ENCODE measurements at regions of chr5 and their contacts with region 1.

Region 1: GRCh38 chr5:43484106-43484849 is 613 bp upstream of the TMEM267 start:
- DNase-seq: peak; percentile 90
- H3K4me3 Mint-ChIP-seq: peak overlapping the region; percentile 99
- H3K27ac Mint-ChIP-seq: peak overlapping the region; percentile 100
- H3K4me1 Mint-ChIP-seq: peaks cover 46% of the 10 kb centered on the region
- H3K27me3 Mint-ChIP-seq: no peaks in the 10 kb centered on the region

Region 2: GRCh38 chr5:43008369-43009153 is 475.7 kb before region 1 on chr5:
- CTCF ChIA-PET with region 1: interaction called, 4 read pairs
- POLR2A ChIA-PET with region 1: interaction called, 21 read pairs
- DNase-seq: peak; percentile 93
- H3K4me3 Mint-ChIP-seq: peak overlapping the region; percentile 89
- H3K27ac Mint-ChIP-seq: peak overlapping the region; percentile 97
- H3K4me1 Mint-ChIP-seq: peaks cover 39% of the 10 kb centered on the region
- H3K27me3 Mint-ChIP-seq: peaks cover 5% of the 10 kb centered on the region

Region 3: DNA sequence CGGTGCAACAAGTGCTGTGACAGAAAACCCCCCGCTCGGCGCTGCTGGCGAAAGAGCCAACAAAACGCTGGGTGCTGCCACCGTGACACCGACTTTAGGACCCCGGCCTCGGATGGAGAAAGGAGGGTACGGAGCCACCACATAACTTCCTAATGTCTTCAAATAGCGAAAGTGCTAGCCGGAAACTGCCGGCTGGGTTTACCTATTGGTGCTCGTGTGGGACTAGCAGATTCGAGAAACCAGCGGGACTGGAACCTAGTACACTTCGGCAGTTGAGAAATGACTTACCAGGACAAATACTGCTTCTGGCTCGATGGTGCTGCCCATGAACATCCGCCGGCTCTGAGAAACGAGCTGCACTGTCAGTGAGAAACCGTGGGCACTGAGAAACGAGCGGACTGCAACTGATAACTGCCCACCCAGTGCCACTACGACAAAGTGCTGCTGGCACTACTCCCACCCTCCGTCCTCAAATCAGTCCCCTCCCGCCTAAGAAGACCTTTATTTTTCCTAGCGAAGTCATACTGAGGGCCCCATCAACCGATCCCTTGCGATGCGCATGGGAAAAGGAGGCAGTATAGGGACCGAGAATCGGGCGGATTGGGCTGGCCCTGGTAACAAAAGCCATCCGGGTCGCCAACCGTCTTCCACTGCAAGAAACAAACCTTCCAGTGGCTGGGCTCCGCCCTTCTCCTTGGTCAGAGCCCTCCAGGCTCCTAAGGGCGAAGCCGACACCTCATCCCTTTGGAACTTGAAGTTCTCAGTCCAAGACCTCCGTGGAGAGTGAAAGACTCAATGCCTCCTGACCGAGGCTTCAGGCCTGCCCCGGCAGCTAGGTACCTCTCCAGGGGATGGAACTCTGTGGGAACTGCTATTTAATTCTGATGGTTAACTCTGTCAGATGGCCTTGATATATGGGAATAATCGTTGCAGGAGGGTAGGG is 417.2 kb before region 1 on chr5:
- CTCF ChIA-PET with region 1: interaction called, 9 read pairs
- POLR2A ChIA-PET with region 1: interaction called, 22 read pairs
- DNase-seq: peak; percentile 90
- H3K4me3 Mint-ChIP-seq: peak overlapping the region; percentile 97
- H3K27ac Mint-ChIP-seq: peak overlapping the region; percentile 100
- H3K4me1 Mint-ChIP-seq: peaks cover 47% of the 10 kb centered on the region
- H3K27me3 Mint-ChIP-seq: no peaks in the 10 kb centered on the region

Region 4: GRCh38 chr5:43305948-43306565 is 178.2 kb before region 1 on chr5:
- CTCF ChIA-PET with region 1: interaction called, 22 read pairs
- POLR2A ChIA-PET with region 1: interaction called, 80 read pairs
- DNase-seq: no peak
- H3K4me3 Mint-ChIP-seq: no peak overlapping the region
- H3K27ac Mint-ChIP-seq: peak overlapping the region; percentile 53
- H3K4me1 Mint-ChIP-seq: peaks cover 80% of the 10 kb centered on the region
- H3K27me3 Mint-ChIP-seq: no peaks in the 10 kb centered on the region

Region 5: GRCh38 chr5:43396762-43397304 is 87.4 kb before region 1 on chr5:
- CTCF ChIA-PET with region 1: interaction called, 18 read pairs
- POLR2A ChIA-PET with region 1: interaction called, 58 read pairs
- DNase-seq: peak; percentile 74
- H3K4me3 Mint-ChIP-seq: peak overlapping the region; percentile 99
- H3K27ac Mint-ChIP-seq: peak overlapping the region; percentile 94
- H3K4me1 Mint-ChIP-seq: peaks cover 33% of the 10 kb centered on the region
- H3K27me3 Mint-ChIP-seq: no peaks in the 10 kb centered on the region

Region 6: GRCh38 chr5:43556857-43557542 is 72.7 kb after region 1 on chr5 and contains the start of gene PAIP1:
- CTCF ChIA-PET with region 1: interaction called, 14 read pairs
- POLR2A ChIA-PET with region 1: interaction called, 60 read pairs
- DNase-seq: peak; percentile 87
- H3K4me3 Mint-ChIP-seq: peak within 1 kb of the TSS; percentile 86
- H3K27ac Mint-ChIP-seq: peak within 1 kb of the TSS; percentile 87
- H3K4me1 Mint-ChIP-seq: peaks cover 14% of the 10 kb centered on the region
- H3K27me3 Mint-ChIP-seq: peaks cover 7% of the 10 kb centered on the region
- total RNA-seq, gene PAIP1: 37.0 to 38.8 TPM

Region 7: GRCh38 chr5:43643327-43643726 is 159.0 kb after region 1 on chr5:
- CTCF ChIA-PET with region 1: no interaction called
- POLR2A ChIA-PET with region 1: no interaction called
- DNase-seq: no peak
- H3K4me3 Mint-ChIP-seq: no peak overlapping the region
- H3K27ac Mint-ChIP-seq: no peak overlapping the region
- H3K4me1 Mint-ChIP-seq: no peaks in the 10 kb centered on the region
- H3K27me3 Mint-ChIP-seq: no peaks in the 10 kb centered on the region

Measured in activated CD4-positive, alpha-beta memory T cell treated with anti-CD3 and anti-CD28 coated beads, Interleukin-2, amount 10 ng/mL, durations not matched to agents 7 days and 5 days (primary cell).